ENCODE measurements at regions of chr20 and their contacts with region 1.

Region 1: GRCh38 chr20:362271-363254 is 15.7 kb downstream of the NRSN2 start:
- DNase-seq: no peak
- ATAC-seq: peak; percentile 33
- H3K4me3 ChIP-seq: no peak overlapping the region
- H3K4me3 Mint-ChIP-seq: no peak overlapping the region
- H3K27ac ChIP-seq: no peak overlapping the region
- H3K27ac Mint-ChIP-seq: peak overlapping the region; percentile 43
- H3K4me1 ChIP-seq: peaks cover 17 to 26% of the 10 kb centered on the region in 2 donors
- H3K4me1 Mint-ChIP-seq: peaks cover 30% of the 10 kb centered on the region
- H3K27me3 ChIP-seq: no peaks in the 10 kb centered on the region
- H3K27me3 Mint-ChIP-seq: peaks cover 4% of the 10 kb centered on the region
- CTCF ChIP-seq: no peak

Region 2: DNA sequence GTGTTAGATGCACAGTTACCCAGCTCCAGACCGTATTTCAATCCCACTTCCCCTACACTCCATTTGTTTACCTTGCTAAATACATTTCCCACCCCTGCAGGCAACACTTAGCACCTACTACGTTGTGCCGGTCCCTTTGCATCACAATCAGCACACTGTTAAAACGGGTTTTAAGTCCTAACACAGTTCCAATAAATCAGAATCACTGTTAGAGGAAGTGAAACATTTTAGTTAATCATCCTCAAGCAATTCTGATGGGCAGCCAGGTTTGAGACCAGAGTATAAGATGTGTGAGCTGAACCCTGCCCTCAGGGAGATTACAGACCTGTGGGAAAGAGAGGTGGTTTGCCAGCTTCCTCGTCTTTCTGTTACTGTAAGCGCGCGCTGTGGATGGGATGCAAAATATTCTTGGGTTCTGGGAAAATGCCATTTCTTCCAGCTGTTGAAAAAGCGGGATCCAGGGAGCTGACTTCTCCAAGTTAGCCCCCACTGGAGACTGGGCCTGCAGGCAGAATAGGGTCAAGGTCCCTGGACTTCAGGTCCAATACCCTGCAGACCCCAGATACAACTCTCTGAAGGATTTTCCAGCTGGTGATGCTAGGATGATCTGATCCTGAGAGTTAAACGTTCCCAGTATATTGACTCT is 62.1 kb before region 1 on chr20:
- CTCF ChIA-PET with region 1: no interaction called
- POLR2A ChIA-PET with region 1: no interaction called
- intact Hi-C with region 1: no loop called
- DNase-seq: peak; percentile 27
- ATAC-seq: no peak
- H3K4me3 ChIP-seq: no peak overlapping the region
- H3K4me3 Mint-ChIP-seq: peak overlapping the region; percentile 59
- H3K27ac ChIP-seq: no peak overlapping the region
- H3K27ac Mint-ChIP-seq: peak overlapping the region; percentile 8
- H3K4me1 ChIP-seq: peaks cover 16 to 27% of the 10 kb centered on the region in 2 donors
- H3K4me1 Mint-ChIP-seq: peaks cover 40% of the 10 kb centered on the region
- H3K27me3 ChIP-seq: no peaks in the 10 kb centered on the region
- H3K27me3 Mint-ChIP-seq: no peaks in the 10 kb centered on the region
- CTCF ChIP-seq: no peak

Region 3: GRCh38 chr20:478949-479429 is 116.4 kb after region 1 on chr20:
- CTCF ChIA-PET with region 1: interaction called, 24 read pairs
- POLR2A ChIA-PET with region 1: no interaction called
- intact Hi-C with region 1: no loop called
- DNase-seq: peak; percentile 79
- ATAC-seq: peak; percentile 64
- H3K4me3 ChIP-seq: no peak overlapping the region
- H3K4me3 Mint-ChIP-seq: no peak overlapping the region
- H3K27ac ChIP-seq: no peak overlapping the region
- H3K27ac Mint-ChIP-seq: peak overlapping the region; percentile 50
- H3K4me1 ChIP-seq: no peaks in the 10 kb centered on the region
- H3K4me1 Mint-ChIP-seq: peaks cover 2% of the 10 kb centered on the region
- H3K27me3 ChIP-seq: no peaks in the 10 kb centered on the region
- H3K27me3 Mint-ChIP-seq: no peaks in the 10 kb centered on the region
- CTCF ChIP-seq: peak; percentile 85

Measured in B cell (primary cell).